Ascending aorta (tissue), 2 donors: ENCODE measurements at regions of chr19 and their contacts with region 1.

Region 1: DNA sequence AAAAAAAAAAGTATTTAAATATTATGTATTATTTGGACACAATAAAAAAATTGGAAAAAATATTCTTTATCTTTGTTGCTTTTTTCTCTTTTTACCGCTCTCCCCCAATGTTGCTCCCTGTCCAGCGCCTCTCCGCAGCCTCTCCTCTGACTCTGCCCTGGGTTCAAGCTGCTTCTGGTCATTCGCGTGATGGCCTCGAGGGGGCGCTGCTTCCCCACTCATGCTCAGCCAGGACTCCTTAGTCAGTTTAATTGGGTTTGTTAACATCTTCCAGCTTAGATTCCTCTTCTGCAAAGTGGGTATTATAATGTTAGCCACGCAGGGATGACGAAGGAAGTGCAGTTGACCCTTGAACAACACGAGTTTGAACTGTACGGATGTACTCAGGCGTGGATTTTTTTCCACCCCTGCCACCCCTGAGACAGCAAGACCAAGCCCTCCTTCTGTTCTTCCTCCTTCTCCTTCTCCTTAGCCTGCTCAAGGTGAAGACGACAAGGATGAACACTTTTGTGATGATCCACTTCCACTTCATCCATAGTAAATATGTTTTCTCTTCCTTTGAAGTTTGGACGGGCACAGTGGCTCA is 4.9 kb upstream of the NWD1 start:
- DNase-seq: peak in 1 of 2 donors; percentile 65
- H3K4me3 ChIP-seq: no peak overlapping the region
- H3K27ac ChIP-seq: no peak overlapping the region
- H3K4me1 ChIP-seq: no peaks in the 10 kb centered on the region
- H3K27me3 ChIP-seq: no peaks in the 10 kb centered on the region
- CTCF ChIP-seq: peak; percentile 69 to 82 (median 79)

Region 2: DNA sequence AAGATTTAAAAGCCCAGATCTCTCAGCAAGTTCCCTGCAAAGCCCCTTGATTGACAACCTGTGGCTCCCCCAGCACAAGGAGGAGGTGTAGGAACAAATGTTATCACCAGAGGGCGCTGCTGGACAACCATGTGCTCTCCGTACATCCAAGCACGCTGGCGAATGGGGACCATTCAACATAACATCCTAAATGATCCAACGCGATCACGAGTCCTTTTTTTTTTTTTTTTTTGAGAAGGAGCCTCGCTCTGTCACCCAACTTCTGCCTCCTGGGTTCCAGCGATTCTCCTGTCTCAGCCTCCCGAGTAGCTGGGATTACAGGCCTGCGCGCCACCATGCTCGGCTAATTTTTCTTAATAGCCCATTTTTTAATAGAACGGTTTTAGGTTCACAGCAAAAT is 56.8 kb after region 1 on chr19:
- intact Hi-C with region 1: loop called (anchors 2 kb)
- DNase-seq: peak in 1 of 2 donors; percentile 89
- H3K4me3 ChIP-seq: no peak overlapping the region
- H3K27ac ChIP-seq: no peak overlapping the region
- H3K4me1 ChIP-seq: no peaks in the 10 kb centered on the region
- H3K27me3 ChIP-seq: no peaks in the 10 kb centered on the region
- CTCF ChIP-seq: peak; percentile 57 to 85 (median 83)

Region 3: DNA sequence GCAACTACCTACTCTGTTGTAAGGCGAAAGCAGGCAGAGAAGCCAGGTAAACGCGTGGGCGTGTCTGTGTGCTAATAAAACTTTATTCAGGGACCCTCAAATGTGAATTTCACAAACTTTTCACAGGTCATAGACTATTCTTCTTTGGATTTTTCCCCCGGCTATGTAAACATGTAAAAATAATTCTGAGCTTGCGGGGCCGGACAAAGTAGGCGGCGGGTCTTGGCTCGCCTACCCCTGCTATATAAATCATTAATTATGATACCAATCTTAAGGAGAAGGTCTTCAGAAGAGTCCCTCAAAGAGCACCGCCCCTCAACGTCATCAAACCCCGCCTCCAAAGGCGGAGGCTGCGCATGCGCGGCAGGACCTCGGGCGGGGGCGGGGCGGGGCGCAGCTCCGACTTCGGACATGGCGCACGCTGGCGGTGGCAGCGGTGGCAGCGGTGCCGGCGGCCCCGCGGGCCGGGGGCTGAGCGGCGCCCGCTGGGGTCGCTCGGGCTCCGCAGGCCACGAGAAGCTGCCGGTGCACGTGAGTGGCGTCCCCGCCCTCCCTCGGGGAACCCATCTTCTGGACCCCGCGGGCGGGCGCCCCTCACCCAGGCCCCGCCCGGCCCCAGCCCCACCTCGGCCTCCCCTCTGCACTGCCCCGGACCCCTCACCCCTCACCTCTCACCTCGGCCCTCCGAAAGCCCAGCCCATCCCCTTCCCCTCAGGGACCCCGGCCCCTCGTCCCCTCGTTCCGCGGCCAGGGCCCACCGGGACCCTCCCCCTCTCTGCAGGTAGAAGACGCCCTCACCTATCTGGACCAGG is 114.4 kb after region 1 on chr19 and contains the start of gene SIN3B:
- intact Hi-C with region 1: loop called (anchors 10 kb)
- DNase-seq: peak; percentile 14 to 92
- H3K4me3 ChIP-seq: peak within 1 kb of the TSS; percentile 82 to 96
- H3K27ac ChIP-seq: peak within 1 kb of the TSS; percentile 71 to 80
- H3K4me1 ChIP-seq: peaks cover 5 to 7% of the 10 kb centered on the region in 2 donors
- H3K27me3 ChIP-seq: no peaks in the 10 kb centered on the region
- CTCF ChIP-seq: no peak
- total RNA-seq, gene SIN3B: 72.3 TPM

Region 4: DNA sequence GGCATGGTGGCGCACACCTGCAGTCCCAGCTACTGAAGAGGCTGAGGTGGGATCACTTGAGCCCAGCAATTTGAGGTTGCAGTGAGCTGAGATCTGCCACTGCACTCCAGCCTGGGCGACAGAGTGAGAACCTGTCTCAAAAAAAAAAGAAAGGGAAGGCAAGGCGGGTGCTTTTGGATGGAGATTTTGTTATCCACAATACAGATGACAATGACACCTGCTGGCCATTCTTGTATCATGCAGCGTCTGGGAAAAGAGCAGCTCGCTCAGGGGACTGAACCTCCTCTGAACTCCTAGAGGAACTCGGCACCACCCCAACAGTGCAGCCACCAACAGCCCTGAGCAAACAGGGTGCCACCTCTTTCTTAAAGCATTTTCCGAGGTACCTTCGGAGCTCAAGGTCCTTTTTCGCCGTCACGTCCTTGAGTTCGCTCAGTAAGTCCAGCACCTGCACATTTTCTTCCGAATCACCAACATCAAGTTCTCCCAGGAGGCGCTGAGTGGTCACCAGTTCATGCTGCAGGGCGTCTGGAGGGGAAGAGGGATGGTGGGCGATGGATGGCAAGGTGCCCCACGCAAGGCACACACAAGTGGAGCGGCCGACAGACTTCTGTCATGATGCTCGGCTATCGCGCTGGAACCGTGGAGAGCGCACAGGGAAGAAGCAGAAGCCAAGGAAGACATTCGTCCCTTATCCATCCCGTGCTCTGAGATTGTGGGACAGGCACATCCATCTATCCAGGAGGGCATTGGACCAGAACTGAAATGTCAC is 337.8 kb after region 1 on chr19:
- intact Hi-C with region 1: loop called (anchors 5 kb)
- DNase-seq: no peak
- H3K4me3 ChIP-seq: no peak overlapping the region
- H3K27ac ChIP-seq: no peak overlapping the region
- H3K4me1 ChIP-seq: no peaks in the 10 kb centered on the region
- H3K27me3 ChIP-seq: no peaks in the 10 kb centered on the region
- CTCF ChIP-seq: peak; percentile 20 to 54 (median 36)